MCF 10A (cell line): ENCODE measurements at regions of chr2 and their contacts with region 1.

Region 1: DNA sequence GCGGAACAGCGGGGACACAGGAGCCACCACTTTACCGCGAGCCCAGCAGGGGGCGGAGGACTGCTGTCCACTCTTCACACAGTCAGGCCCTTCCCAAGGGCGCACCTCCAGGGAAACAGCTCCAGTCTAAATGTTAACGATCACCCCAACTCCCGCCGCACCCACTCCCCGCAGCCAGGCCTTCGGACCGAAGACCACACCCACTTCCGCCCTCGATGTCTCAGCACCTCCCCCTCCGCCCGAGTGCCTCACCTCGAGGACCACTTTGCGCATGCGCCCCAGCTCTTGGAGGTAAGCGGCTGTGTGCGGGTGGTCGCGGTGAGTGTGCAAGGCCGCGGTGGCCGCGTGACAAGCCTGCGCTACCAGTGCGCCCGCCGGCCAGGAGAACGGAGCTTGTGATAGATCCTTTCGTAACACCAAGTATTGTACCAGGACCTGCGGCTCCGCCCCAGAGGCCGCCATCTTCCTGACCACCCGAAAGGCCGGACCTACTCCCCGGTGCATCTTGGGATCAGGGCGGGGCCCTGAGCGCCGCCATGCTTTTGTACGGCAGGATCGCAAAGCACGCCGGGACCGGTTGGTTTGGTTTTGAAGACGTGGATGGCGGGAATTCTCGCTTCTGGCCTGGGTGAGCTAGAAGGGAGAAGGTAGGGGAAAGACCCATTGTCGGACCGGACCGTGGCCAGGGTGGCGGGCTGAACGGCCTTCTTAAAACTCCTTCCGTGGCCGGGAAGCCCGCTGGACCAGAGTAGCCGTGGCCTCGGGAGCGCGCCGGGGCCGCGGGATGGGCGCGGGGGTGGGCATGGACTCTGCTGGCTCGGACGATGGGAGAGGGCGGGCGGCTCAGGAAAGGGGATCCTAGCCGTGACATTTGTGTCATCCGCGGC is at the starts of genes CENPO and PTRHD1:
- DNase-seq: peak; percentile 96
- H3K4me3 Mint-ChIP-seq: peak within 1 kb of the TSS; percentile 90
- H3K27ac Mint-ChIP-seq: peak within 1 kb of the TSS; percentile 95
- H3K4me1 Mint-ChIP-seq: peaks cover 32% of the 10 kb centered on the region
- H3K27me3 Mint-ChIP-seq: no peaks in the 10 kb centered on the region
- CTCF ChIP-seq: peak; percentile 64
- total RNA-seq, gene CENPO: 10.6 and 14.9 TPM in 2 replicates
- total RNA-seq, gene PTRHD1: 23.1 and 35.1 TPM in 2 replicates

Region 2: DNA sequence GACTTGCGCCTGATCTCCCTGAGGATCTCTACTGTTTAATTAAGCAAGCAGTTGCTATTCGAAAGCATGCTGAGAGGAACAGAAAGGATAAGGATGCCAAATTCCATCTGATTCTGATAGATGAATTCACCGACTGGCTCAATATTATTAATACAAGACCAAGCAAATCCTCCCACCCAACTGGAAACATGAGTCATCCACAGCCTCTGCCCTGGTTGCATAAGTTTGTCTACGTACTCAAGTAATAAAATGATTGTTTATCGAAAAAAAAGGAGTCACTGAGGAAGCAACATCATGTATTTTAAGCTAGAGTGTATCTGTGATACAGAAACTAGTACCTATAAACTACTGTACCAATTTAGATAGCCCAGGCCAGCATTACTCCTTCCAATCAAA is 892.2 kb before region 1 on chr2:
- CTCF ChIA-PET with region 1: no interaction called
- POLR2A ChIA-PET with region 1: no interaction called
- intact Hi-C with region 1: no loop called
- DNase-seq: peak; percentile 77
- H3K4me3 Mint-ChIP-seq: no peak overlapping the region
- H3K27ac Mint-ChIP-seq: peak overlapping the region; percentile 49
- H3K4me1 Mint-ChIP-seq: peaks cover 24% of the 10 kb centered on the region
- H3K27me3 Mint-ChIP-seq: no peaks in the 10 kb centered on the region
- CTCF ChIP-seq: no peak

Region 3: DNA sequence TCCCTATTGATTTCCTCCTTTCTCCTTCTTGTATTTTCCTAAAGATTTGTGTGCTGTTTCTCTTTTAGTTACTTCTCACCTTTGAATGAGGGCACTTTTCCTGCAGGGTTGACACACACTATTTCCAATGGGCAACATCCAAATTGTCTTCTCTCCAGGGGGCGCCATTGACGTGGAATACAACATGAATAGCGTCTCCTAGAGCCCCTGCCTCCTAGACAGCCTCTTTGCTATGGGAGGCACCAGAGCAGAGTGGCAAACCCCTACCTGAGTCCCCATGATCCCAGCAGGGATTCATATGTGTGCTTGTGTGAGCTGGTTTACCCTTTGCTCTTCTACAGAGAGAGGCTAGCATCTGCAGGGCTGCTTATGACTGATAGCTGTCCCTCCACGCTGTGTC is 371.4 kb before region 1 on chr2:
- CTCF ChIA-PET with region 1: no interaction called
- POLR2A ChIA-PET with region 1: no interaction called
- intact Hi-C with region 1: loop called (anchors 1 kb)
- DNase-seq: peak; percentile 75
- H3K4me3 Mint-ChIP-seq: no peak overlapping the region
- H3K27ac Mint-ChIP-seq: no peak overlapping the region
- H3K4me1 Mint-ChIP-seq: no peaks in the 10 kb centered on the region
- H3K27me3 Mint-ChIP-seq: no peaks in the 10 kb centered on the region
- CTCF ChIP-seq: peak; percentile 39

Region 4: GRCh38 chr2:24490674-24491625 is 302.2 kb before region 1 on chr2 and contains the start of gene NCOA1:
- CTCF ChIA-PET with region 1: interaction called, 4 read pairs
- POLR2A ChIA-PET with region 1: interaction called, 3 read pairs
- intact Hi-C with region 1: loop called (anchors 5 kb)
- DNase-seq: peak; percentile 88
- H3K4me3 Mint-ChIP-seq: peak within 1 kb of the TSS; percentile 83
- H3K27ac Mint-ChIP-seq: peak within 1 kb of the TSS; percentile 89
- H3K4me1 Mint-ChIP-seq: peaks cover 26% of the 10 kb centered on the region
- H3K27me3 Mint-ChIP-seq: no peaks in the 10 kb centered on the region
- CTCF ChIP-seq: no peak
- total RNA-seq, gene NCOA1: 15.4 and 15.8 TPM in 2 replicates

Region 5: GRCh38 chr2:24613154-24613814 is 179.8 kb before region 1 on chr2:
- CTCF ChIA-PET with region 1: no interaction called
- POLR2A ChIA-PET with region 1: no interaction called
- intact Hi-C with region 1: loop called (anchors 10 kb)
- DNase-seq: peak; percentile 66
- H3K4me3 Mint-ChIP-seq: no peak overlapping the region
- H3K27ac Mint-ChIP-seq: no peak overlapping the region
- H3K4me1 Mint-ChIP-seq: peaks cover 8% of the 10 kb centered on the region
- H3K27me3 Mint-ChIP-seq: no peaks in the 10 kb centered on the region
- CTCF ChIP-seq: no peak

Region 6: GRCh38 chr2:24779116-24779515 is 14.0 kb before region 1 on chr2:
- CTCF ChIA-PET with region 1: interaction called, 15 read pairs
- POLR2A ChIA-PET with region 1: interaction called, 3 read pairs
- intact Hi-C with region 1: no loop called
- DNase-seq: no peak
- H3K4me3 Mint-ChIP-seq: no peak overlapping the region
- H3K27ac Mint-ChIP-seq: no peak overlapping the region
- H3K4me1 Mint-ChIP-seq: no peaks in the 10 kb centered on the region
- H3K27me3 Mint-ChIP-seq: peaks cover 10% of the 10 kb centered on the region
- CTCF ChIP-seq: no peak

Region 7: DNA sequence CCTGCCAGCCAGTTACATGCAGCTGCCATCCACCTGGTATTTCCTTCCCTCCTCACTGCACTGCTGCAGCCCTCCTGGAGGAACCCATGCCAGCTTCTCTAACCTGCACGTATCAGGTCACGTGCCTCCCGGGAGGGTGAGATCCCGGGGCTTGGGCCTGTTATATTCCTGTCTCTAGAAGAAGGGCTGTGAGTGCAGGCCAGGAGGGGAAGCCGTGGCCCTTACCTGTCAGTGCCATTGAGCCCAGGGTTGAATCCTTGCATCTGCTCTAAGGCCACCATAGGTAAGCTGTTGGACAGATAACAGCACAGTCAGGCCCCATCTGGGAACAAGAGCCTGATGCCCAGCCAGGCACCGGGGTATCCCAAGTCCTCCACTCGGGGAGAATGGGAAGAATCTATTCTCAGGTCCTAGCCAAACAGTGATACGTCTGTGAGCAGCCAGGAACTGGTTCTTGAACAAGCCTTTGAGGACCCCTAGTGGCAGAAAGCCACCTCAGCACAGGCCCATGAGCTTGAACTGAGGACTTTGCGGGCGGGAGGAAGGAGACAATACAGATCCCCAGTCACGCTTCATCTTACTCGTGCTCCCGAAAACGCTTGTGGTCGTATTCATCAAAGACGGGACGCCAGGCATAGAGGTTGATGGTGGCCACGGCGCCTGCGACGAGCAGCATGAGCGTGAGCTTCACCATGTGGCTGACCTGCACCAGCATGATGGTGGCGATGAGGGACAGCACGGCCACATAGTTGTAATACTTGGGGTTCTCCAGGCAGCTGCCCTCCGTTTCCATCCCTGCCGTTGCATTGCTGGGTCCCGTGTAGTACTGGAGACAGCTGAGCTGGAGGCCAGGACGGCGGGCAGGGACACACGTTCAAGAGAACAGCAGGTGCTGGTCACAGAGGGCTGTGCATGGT is 34.5 kb after region 1 on chr2:
- CTCF ChIA-PET with region 1: interaction called, 7 read pairs
- POLR2A ChIA-PET with region 1: interaction called, 3 read pairs
- intact Hi-C with region 1: loop called (anchors 1 kb)
- DNase-seq: peak; percentile 73
- H3K4me3 Mint-ChIP-seq: no peak overlapping the region
- H3K27ac Mint-ChIP-seq: no peak overlapping the region
- H3K4me1 Mint-ChIP-seq: no peaks in the 10 kb centered on the region
- H3K27me3 Mint-ChIP-seq: no peaks in the 10 kb centered on the region
- CTCF ChIP-seq: peak; percentile 58

Region 8: DNA sequence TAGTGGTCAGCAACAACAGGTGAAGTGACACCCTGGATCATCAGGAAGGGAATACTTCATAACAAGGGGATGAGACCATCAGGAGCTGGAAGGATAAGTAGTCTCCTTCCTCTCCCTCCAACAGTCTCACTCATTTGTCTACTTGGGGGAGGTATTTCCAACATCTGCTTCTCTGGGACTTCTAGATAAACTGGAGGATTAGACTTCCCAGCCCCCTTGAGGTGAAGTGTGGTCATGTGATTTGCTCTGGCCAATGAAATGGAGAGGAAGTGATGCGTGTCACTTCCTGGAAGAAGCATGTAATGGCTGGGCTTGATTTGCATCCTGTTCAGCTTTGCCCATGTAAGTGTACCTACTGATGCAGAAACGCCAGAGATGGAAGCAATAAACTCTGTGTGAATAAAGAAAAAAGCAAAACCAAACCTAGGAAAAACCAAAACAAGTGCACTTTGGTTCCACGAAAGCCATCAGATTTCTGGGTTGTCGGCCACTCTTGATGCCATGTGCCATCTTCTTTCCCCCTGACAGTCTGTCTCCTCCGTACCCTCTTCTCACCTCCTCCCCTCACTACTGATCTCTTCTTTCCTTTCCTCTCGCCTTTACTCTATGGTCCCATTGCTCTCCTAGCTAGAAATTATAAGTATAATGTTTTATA is 624.7 kb after region 1 on chr2:
- CTCF ChIA-PET with region 1: no interaction called
- POLR2A ChIA-PET with region 1: no interaction called
- intact Hi-C with region 1: no loop called
- DNase-seq: no peak
- H3K4me3 Mint-ChIP-seq: no peak overlapping the region
- H3K27ac Mint-ChIP-seq: no peak overlapping the region
- H3K4me1 Mint-ChIP-seq: no peaks in the 10 kb centered on the region
- H3K27me3 Mint-ChIP-seq: no peaks in the 10 kb centered on the region
- CTCF ChIP-seq: no peak